HepG2 (cell line): ENCODE measurements at regions of chr3 and their contacts with region 1.

Region 1: DNA sequence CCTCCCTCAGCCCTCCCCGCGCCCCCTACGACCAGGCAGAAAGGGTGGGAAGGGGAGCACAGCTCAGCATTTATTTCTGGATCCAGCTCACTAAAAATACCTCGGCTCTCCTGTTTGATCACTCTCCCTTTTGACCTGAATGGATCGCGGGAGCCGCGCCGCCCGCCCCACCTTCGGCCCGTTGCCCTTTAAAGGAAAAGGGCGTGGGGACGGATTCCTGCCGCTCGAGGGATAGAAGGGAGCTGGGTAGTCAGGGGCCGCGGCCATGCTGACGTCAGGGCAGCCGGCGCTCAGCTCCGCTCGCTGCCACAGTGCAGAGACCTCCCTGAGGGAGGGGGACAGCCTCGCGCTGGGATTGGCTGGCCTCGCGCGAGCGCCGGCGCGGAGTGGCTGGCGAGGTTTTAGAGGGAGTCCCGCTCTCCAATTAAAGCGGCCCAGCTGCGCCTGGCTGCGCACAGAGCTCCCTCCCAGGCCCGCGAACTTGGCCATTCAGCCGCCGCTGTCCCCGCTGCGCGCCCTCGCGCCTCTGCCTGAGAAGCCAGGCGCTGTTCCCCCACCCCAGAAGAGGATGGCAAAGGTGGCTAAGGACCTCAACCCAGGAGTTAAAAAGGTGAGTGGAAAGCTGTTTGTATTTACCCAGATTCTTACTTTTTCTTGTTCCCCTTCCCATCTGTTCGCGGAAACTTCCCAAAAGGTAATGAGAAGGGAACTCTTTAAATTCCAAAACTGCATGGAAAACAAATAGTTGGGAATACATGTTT is at the start of gene LMCD1:
- DNase-seq: peak; percentile 93
- ATAC-seq: peak; percentile 98
- H3K4me3 ChIP-seq: peak within 1 kb of the TSS; percentile 29 to 61 (median 56)
- H3K27ac ChIP-seq: peak within 1 kb of the TSS; percentile 72
- H3K4me1 ChIP-seq: peaks cover 71% of the 10 kb centered on the region
- H3K27me3 ChIP-seq: no peaks in the 10 kb centered on the region
- CTCF ChIP-seq: peak; percentile 26
- EP300 ChIP-seq: 0 out of 4 replicates have a peak, but pooled peaks of 1 of the 2 experiments have one; percentile 3
- POLR2A ChIP-seq: peak; percentile 38 to 45; a peak in 3 of 4 replicates
- RAD21 ChIP-seq: peak; percentile 43
- total RNA-seq, gene LMCD1: 6.1 and 6.2 TPM in 2 replicates

Region 2: DNA sequence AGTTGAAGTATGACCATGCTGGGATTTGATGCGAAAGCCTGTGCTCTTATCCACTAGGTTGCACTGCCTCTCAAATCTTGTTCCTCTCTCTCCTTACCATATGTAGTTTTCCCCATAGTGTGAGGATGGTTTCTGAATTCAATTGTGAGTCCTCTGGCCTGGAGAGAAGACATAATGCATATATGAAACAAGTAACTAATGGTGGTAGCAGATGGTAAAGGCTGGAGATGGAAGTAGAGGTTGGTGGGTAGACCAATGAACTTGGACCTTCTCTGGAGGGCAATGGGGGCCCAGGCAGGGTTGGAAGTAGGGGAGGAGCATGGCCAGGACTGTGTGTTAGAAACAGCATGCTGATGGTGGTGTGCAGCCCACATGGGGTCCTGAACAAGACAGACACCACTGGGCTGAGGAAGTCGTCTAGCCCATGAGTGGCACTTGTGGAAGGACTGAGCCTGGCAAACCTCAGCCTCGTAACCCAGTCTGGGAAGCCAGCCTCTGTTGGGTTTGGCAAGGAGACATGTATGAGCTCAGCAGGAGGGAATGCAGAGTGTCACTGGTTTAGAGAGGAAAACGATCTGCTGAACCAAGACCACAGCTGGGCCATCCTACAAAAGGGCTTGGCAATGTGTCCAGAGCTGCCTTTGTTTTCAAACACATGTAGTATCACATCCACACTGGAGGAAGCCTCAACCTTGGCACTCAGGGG is 18.4 kb before region 1 on chr3:
- CTCF ChIA-PET with region 1: no interaction called
- POLR2A ChIA-PET with region 1: interaction called, 10 read pairs
- in situ Hi-C with region 1: no loop called
- intact Hi-C with region 1: loop called (anchors 1 kb)
- DNase-seq: peak; percentile 75
- ATAC-seq: peak; percentile 80
- H3K4me3 ChIP-seq: no peak overlapping the region
- H3K27ac ChIP-seq: peak overlapping the region; percentile 33
- H3K4me1 ChIP-seq: peaks cover 69% of the 10 kb centered on the region
- H3K27me3 ChIP-seq: no peaks in the 10 kb centered on the region
- CTCF ChIP-seq: no peak
- EP300 ChIP-seq: no peak
- POLR2A ChIP-seq: no peak
- RAD21 ChIP-seq: no peak

Region 3: GRCh38 chr3:8490079-8490552 is 11.4 kb before region 1 on chr3:
- CTCF ChIA-PET with region 1: no interaction called
- POLR2A ChIA-PET with region 1: interaction called, 21 read pairs
- in situ Hi-C with region 1: no loop called
- intact Hi-C with region 1: loop called (anchors 1 kb)
- DNase-seq: peak; percentile 66
- ATAC-seq: no peak
- H3K4me3 ChIP-seq: no peak overlapping the region
- H3K27ac ChIP-seq: peak overlapping the region; percentile 36
- H3K4me1 ChIP-seq: peaks cover 61% of the 10 kb centered on the region
- H3K27me3 ChIP-seq: no peaks in the 10 kb centered on the region
- CTCF ChIP-seq: no peak
- EP300 ChIP-seq: no peak
- POLR2A ChIP-seq: no peak
- RAD21 ChIP-seq: no peak

Region 4: GRCh38 chr3:8529181-8529637 is 27.7 kb after region 1 on chr3:
- CTCF ChIA-PET with region 1: no interaction called
- POLR2A ChIA-PET with region 1: interaction called, 16 read pairs
- in situ Hi-C with region 1: no loop called
- intact Hi-C with region 1: no loop called
- DNase-seq: peak; percentile 59
- ATAC-seq: peak; percentile 94
- H3K4me3 ChIP-seq: no peak overlapping the region
- H3K27ac ChIP-seq: peak overlapping the region; percentile 50
- H3K4me1 ChIP-seq: peaks cover 53% of the 10 kb centered on the region
- H3K27me3 ChIP-seq: no peaks in the 10 kb centered on the region
- CTCF ChIP-seq: no peak
- EP300 ChIP-seq: no peak
- POLR2A ChIP-seq: no peak
- RAD21 ChIP-seq: no peak

Region 5: DNA sequence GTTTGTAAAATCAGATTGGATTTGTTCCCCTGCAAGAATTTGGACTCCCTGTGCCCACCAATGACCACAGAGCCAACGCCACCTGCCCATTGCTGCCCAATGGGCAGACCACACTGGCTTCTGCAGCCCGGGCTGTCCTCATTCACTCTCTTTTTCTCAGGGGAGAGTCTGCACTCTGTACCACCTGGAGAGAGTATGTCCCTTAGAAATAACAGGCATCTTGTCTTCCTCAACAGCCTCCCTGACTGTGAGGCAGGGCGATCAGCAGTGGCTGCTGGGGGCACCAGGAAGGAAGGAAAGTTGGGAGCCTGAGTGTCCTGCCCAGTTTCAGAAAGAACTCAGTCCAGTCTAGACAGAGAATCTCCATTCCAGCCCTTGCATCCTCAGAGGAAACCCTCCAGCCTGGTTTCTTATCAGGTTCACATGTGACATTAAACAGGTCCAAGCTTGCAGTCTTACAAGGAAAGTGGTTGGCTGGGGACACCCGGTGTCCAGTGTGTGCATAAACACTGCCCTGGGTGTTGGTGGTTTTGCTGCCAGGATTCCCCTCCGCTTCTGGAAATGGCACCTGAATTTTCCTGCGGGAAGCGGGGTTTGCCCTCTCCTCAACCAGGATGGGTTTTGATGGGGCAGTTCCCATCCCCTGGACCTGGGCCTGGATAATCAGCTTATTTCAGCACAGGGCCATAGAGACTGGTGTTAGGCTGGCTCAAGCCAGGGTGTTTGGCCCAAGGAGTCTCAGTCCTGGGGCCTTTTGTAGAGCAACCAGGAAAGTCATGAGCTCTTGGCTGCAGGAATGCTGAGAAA is 105.9 kb after region 1 on chr3:
- CTCF ChIA-PET with region 1: no interaction called
- POLR2A ChIA-PET with region 1: no interaction called
- in situ Hi-C with region 1: no loop called
- intact Hi-C with region 1: loop called (anchors 10 kb)
- DNase-seq: peak; percentile 55
- ATAC-seq: peak; percentile 93
- H3K4me3 ChIP-seq: no peak overlapping the region
- H3K27ac ChIP-seq: no peak overlapping the region
- H3K4me1 ChIP-seq: peaks cover 5% of the 10 kb centered on the region; the same call in 1 of the 2 replicates
- H3K27me3 ChIP-seq: no peaks in the 10 kb centered on the region
- CTCF ChIP-seq: peak; percentile 83
- EP300 ChIP-seq: no peak
- POLR2A ChIP-seq: no peak
- RAD21 ChIP-seq: peak; percentile 82